ENCODE measurements at regions of chr5 and their contacts with region 1.

Region 1: DNA sequence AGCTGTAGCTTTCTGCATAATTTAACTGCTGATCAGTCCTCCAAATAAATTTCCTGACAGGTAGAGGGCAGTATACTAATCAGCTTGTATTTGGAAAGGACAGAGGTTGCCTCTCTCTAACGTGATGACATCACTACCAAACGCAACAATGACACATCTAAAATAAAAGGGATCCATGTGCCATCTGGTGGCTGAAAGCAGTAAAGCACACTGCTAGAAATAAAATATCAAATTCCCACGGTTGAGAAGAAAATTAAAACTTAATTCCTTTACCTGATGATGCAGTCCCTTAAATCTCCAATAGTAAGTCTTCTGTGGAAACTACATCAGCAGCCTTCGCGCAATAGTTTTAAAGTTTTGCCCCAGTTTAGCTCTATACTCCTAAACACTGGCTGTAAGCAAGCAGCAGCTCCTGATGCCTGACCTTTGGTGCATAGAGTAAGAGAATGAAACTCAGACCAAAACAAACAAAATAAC is 54.5 kb downstream of the DIAPH1 start:
- DNase-seq: peak; percentile 98
- H3K4me3 Mint-ChIP-seq: no peak overlapping the region
- H3K27ac Mint-ChIP-seq: peak overlapping the region; percentile 98
- H3K4me1 Mint-ChIP-seq: peaks cover 39% of the 10 kb centered on the region
- H3K27me3 Mint-ChIP-seq: no peaks in the 10 kb centered on the region
- CTCF ChIP-seq: peak; percentile 92

Region 2: GRCh38 chr5:141192110-141192732 is 372.0 kb before region 1 on chr5 and contains the start of gene PCDHB10:
- CTCF ChIA-PET with region 1: interaction called, 26 read pairs
- POLR2A ChIA-PET with region 1: interaction called, 5 read pairs
- intact Hi-C with region 1: loop called (anchors 1 kb)
- DNase-seq: peak; percentile 60
- H3K4me3 Mint-ChIP-seq: peak within 1 kb of the TSS; percentile 81
- H3K27ac Mint-ChIP-seq: no peak within 1 kb of the TSS
- H3K4me1 Mint-ChIP-seq: peaks cover 6% of the 10 kb centered on the region
- H3K27me3 Mint-ChIP-seq: no peaks in the 10 kb centered on the region
- CTCF ChIP-seq: peak; percentile 76
- total RNA-seq, gene PCDHB10: 1.2 and 1.4 TPM in 2 replicates

Region 3: DNA sequence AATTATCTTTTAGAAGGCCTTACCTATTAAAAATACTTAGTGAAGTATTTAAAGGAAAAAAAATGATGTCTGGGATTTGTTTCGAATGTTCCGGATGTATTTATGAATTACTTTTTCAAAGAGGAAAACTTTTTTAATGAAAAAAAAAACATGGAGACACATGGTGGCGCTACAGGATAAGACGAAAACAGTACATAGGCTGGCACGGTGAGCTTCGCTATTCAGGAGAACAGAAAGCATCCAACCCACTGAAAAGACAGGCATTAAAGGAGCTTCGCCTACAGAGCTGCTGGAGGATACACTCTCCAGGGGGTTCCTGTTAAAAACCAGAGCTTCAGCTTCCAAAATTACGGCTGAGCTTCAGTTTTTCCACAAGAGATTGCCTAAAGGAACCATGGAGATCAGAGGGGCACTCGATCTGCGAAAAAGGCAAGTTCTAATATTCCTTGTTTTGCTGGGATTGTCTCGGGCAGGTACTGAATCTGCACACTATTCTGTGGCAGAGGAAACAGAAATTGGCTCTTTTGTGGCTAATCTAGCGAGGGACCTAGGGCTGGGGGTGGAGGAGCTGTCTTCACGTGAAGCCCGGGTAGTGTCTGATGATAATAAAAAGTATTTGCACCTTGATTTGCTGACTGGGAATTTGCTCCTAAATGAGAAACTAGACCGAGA is 341.0 kb before region 1 on chr5 and contains the start of gene PCDHB14:
- CTCF ChIA-PET with region 1: interaction called, 118 read pairs
- POLR2A ChIA-PET with region 1: interaction called, 91 read pairs
- intact Hi-C with region 1: loop called (anchors 1 kb)
- DNase-seq: peak; percentile 79
- H3K4me3 Mint-ChIP-seq: peak within 1 kb of the TSS; percentile 84
- H3K27ac Mint-ChIP-seq: peak within 1 kb of the TSS; percentile 60
- H3K4me1 Mint-ChIP-seq: no peaks in the 10 kb centered on the region
- H3K27me3 Mint-ChIP-seq: no peaks in the 10 kb centered on the region
- CTCF ChIP-seq: peak; percentile 69
- total RNA-seq, gene PCDHB14: 4.7 and 6.2 TPM in 2 replicates

Region 4: GRCh38 chr5:141392429-141393198 is 171.6 kb before region 1 on chr5 and contains the start of gene PCDHGA8:
- CTCF ChIA-PET with region 1: interaction called, 21 read pairs
- POLR2A ChIA-PET with region 1: interaction called, 6 read pairs
- intact Hi-C with region 1: no loop called
- DNase-seq: peak; percentile 23
- H3K4me3 Mint-ChIP-seq: no peak within 1 kb of the TSS
- H3K27ac Mint-ChIP-seq: no peak within 1 kb of the TSS
- H3K4me1 Mint-ChIP-seq: no peaks in the 10 kb centered on the region
- H3K27me3 Mint-ChIP-seq: no peaks in the 10 kb centered on the region
- CTCF ChIP-seq: no peak
- total RNA-seq, gene PCDHGA8: 0.28 and 0.56 TPM in 2 replicates

Region 5: DNA sequence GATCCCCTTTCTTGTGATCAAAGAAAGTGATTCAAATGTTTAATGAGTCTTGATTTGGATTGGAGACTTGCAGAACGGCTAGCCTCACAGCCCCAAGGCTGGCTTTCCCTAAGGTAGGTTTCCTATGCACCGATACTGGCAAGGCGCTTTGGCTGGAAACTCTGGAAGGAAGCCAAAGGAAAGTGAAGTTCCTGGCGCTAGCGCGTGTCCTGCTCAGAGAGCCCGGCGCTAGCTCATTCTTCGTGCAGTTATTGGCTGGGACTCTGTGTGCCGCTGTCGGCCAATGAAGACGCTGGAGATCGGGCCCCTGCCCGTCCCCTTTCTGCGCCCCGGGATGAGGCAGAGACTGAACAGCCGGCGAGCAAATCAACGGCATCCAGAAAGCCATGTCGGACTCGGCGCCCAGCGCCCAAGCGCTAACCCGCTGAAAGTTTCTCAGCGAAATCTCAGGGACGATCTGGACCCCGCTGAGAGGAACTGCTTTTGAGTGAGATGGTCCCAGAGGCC is 88.6 kb before region 1 on chr5 and contains the start of gene PCDHGC3:
- CTCF ChIA-PET with region 1: interaction called, 35 read pairs
- POLR2A ChIA-PET with region 1: interaction called, 82 read pairs
- intact Hi-C with region 1: no loop called
- DNase-seq: peak; percentile 98
- H3K4me3 Mint-ChIP-seq: peak within 1 kb of the TSS; percentile 94
- H3K27ac Mint-ChIP-seq: peak within 1 kb of the TSS; percentile 84
- H3K4me1 Mint-ChIP-seq: peaks cover 18% of the 10 kb centered on the region
- H3K27me3 Mint-ChIP-seq: no peaks in the 10 kb centered on the region
- CTCF ChIP-seq: peak; percentile 55
- total RNA-seq, gene PCDHGC3: 17.3 and 31.7 TPM in 2 replicates

Region 6: DNA sequence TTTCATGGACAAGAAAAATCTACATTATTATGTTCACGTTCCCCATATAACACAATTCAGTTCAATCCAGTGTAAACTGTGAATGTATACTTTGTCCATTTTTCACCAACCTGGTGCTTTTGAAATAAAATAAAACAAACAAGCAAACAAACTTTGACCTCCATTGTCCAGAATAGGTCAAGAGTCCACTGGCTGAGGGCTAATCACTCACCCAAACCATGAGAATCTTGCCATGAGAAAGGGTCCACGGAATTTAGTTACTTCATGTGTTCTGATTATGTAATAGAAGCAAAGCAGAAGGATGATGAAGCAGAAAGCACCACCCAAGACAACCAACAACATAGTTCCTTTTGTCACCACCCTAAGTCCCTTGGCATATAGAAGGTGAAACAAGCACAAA is 25.9 kb after region 1 on chr5:
- CTCF ChIA-PET with region 1: interaction called, 39 read pairs
- POLR2A ChIA-PET with region 1: interaction called, 4 read pairs
- intact Hi-C with region 1: no loop called
- DNase-seq: no peak
- H3K4me3 Mint-ChIP-seq: no peak overlapping the region
- H3K27ac Mint-ChIP-seq: no peak overlapping the region
- H3K4me1 Mint-ChIP-seq: peaks cover 15% of the 10 kb centered on the region
- H3K27me3 Mint-ChIP-seq: no peaks in the 10 kb centered on the region
- CTCF ChIP-seq: no peak

Region 7: DNA sequence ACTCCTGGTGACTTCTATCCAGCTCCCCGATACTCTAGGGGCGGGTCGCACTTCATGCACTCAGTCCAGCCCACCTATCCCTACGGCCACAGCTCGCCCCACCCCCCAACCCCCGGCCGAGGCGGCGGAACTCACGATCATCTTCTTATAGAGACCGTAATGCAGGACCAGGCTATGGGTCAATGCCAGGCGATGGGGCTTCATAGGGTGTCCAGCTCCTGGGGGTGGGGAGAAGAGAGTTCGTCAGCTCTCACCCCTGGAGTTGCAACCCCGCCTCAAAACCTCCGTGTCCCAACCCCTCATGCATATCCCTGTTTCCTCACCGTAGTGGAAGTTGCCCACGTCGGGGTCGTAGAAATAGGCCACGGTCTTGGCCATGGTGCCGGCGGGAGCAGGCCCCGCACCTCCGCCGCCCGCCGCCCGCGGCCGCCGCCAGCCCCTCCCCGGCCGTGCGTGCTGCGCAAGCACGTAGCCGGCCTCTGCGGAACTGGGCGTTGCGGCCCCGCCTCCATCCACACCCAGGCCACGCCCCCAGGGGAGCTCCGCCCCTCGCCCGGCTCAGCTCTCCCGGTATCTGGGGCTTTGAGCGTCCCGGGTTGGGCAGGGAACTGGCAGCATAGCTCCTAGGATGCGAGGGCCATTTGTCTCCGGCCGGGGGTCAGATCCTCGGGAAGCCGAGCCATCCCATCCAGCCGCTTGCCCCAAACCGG is 72.3 kb after region 1 on chr5 and contains the starts of genes HDAC3 and RELL2:
- CTCF ChIA-PET with region 1: interaction called, 14 read pairs
- POLR2A ChIA-PET with region 1: interaction called, 26 read pairs
- intact Hi-C with region 1: no loop called
- DNase-seq: peak; percentile 95
- H3K4me3 Mint-ChIP-seq: peak within 1 kb of the TSS; percentile 92
- H3K27ac Mint-ChIP-seq: peak within 1 kb of the TSS; percentile 47
- H3K4me1 Mint-ChIP-seq: peaks cover 42% of the 10 kb centered on the region
- H3K27me3 Mint-ChIP-seq: no peaks in the 10 kb centered on the region
- CTCF ChIP-seq: no peak
- total RNA-seq, gene HDAC3: 83.5 and 85.6 TPM in 2 replicates
- total RNA-seq, gene RELL2: 12.5 and 13.3 TPM in 2 replicates

Region 8: DNA sequence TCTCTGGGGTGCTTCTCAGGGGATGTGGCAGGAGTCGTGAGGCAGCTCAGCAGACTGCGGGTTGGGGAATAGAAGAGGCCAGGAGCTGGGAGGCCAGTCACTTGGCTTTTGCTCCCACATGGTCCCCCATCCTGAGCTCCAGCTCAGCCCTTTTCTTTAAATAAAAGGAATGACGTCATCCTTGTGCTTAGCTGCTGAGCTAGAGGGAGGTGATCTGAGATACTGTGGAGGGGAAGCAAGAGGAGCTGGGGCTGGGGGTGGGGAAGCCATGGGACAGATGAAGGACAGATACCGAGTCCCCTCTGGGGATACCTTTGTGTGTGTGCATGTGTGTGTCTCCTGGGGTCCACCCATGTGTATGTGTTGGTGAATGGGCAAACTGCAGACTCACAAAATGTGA is 206.8 kb after region 1 on chr5:
- CTCF ChIA-PET with region 1: no interaction called
- POLR2A ChIA-PET with region 1: no interaction called
- intact Hi-C with region 1: no loop called
- DNase-seq: no peak
- H3K4me3 Mint-ChIP-seq: no peak overlapping the region
- H3K27ac Mint-ChIP-seq: no peak overlapping the region
- H3K4me1 Mint-ChIP-seq: no peaks in the 10 kb centered on the region
- H3K27me3 Mint-ChIP-seq: peaks cover 18% of the 10 kb centered on the region
- CTCF ChIP-seq: no peak

Region 9: GRCh38 chr5:142110051-142110531 is 545.8 kb after region 1 on chr5:
- CTCF ChIA-PET with region 1: no interaction called
- POLR2A ChIA-PET with region 1: no interaction called
- intact Hi-C with region 1: no loop called
- DNase-seq: peak; percentile 58
- H3K4me3 Mint-ChIP-seq: peak overlapping the region; percentile 94
- H3K27ac Mint-ChIP-seq: peak overlapping the region; percentile 86
- H3K4me1 Mint-ChIP-seq: peaks cover 22% of the 10 kb centered on the region
- H3K27me3 Mint-ChIP-seq: no peaks in the 10 kb centered on the region
- CTCF ChIP-seq: peak; percentile 14

Region 10: DNA sequence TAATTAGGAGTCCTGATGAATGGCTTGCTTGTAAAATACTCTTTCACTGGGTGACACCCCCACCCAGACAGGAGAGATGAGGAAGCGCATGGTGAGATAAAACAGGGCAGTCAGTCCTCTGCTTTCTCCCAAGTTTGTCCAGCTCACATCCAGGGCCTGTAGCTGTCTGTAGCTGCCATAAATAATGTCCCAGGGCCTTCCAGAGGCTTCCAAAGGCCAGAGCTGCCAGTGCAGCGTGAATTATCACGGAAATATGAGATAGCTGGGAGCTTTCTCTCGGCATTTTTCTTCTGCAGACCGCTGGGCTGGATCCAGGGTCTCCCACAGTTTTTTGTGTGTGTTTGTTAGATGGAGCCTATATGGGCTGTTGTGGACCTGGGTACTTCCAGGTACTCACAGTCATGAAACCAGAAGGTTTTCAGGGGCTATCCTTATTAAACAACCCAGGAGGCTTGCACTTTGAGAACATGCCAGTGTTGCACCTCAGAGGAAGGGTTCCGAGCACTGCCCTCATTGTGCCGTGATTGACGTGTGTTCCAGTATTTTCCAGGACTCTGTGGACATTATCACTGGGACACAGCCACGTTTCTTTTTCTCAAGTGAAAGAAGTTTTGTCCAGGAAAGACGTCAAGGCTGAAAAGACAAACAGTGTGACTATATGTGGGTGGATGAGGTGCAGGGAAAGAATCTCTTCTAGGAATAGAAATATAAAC is 1004.2 kb after region 1 on chr5:
- CTCF ChIA-PET with region 1: no interaction called
- POLR2A ChIA-PET with region 1: no interaction called
- intact Hi-C with region 1: no loop called
- DNase-seq: no peak
- H3K4me3 Mint-ChIP-seq: no peak overlapping the region
- H3K27ac Mint-ChIP-seq: peak overlapping the region; percentile 68
- H3K4me1 Mint-ChIP-seq: no peaks in the 10 kb centered on the region
- H3K27me3 Mint-ChIP-seq: no peaks in the 10 kb centered on the region
- CTCF ChIP-seq: no peak